Activated CD8-positive, alpha-beta T cell treated with anti-CD3 and anti-CD28 coated beads for 36 hours (primary cell): ENCODE measurements at regions of chr20 and their contacts with region 1.

Region 1: DNA sequence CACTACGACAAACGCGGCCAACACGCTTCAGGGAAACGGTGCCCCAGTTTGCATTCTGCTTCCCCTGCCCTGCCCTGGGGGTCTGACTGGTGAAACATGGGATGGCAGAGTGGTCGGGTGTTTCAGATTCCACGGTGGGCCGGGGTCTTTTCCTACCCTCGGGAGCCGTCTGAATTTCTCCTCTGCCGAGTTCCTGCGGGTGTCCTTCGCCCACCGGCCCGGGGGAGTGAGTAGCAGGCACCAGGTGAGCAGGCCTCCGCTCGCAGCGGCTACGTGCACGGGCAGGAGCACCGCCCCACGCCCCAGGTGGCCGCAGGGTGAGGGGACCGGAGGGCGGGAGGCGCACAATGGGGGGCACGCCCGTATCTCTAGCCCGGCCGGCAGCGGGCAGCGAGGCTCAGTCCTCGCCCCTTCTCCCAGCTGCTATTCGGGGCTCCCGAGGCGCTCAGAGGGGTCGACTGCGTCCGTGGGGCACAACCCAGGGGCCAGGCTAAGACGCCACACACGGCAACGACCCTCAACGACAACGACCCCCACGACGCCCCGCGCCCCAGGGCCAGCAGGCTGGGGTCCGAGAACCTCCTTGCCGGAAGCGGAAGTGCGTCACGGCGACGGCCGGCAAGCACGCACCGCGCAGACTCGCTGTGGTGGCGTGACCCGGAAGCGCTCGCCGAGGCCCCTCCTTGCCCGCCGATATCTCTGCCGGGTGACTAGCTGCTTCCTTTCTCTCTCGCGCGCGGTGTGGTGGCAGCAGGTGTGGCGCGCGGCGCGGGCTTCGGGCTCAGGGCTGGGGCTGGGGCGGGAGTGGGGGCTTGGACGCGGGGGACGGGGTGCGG is at the start of gene RPS21:
- DNase-seq: peak; percentile 94
- ATAC-seq: peak; percentile 87
- H3K4me3 Mint-ChIP-seq: peak within 1 kb of the TSS; percentile 95
- H3K27ac Mint-ChIP-seq: peak within 1 kb of the TSS; percentile 91
- H3K4me1 Mint-ChIP-seq: peaks cover 43% of the 10 kb centered on the region
- H3K27me3 Mint-ChIP-seq: no peaks in the 10 kb centered on the region
- CTCF ChIP-seq: no peak
- total RNA-seq, gene RPS21: 2,670 to 2,760 TPM

Region 2: DNA sequence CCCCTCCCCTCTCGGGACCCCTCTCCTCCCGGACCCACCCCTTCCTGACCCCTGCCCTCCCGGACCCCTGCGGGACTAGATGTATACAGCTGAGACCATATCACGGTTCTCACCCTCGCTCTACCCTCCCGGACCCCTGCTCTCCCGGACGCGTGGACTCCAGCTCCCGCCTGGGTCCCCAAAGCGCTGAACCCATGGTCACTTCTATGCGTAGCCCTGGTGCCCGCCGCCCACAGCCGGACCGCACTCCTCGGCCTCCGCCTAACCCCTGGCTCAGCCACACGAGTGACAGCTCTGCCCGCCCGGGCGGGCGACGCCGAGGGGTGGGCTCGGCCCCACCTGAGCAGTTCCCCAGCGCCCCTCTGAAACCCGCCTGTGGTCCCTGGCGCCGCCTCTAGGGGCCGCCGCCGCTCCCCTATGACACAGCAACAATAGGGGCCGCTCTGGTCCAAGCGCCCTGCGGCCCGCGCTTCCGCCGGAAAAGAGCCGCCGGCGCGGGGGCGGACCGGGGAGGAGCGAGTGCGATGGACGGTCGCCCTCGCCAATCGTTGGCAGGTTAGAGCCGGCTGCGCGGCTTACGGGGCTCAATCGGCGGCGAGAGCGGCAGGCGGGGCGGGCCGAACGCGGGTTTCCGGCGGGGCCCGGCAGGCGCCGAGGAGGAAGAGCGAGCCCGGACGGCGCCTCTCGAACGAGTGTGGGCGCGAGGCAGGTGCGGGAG is 84.1 kb before region 1 on chr20 and contains the start of gene ADRM1:
- CTCF ChIA-PET with region 1: interaction called, 18 read pairs
- POLR2A ChIA-PET with region 1: interaction called, 5 read pairs
- intact Hi-C with region 1: loop called (anchors 2 kb)
- DNase-seq: peak; percentile 96
- ATAC-seq: peak; percentile 86
- H3K4me3 Mint-ChIP-seq: peak within 1 kb of the TSS; percentile 96
- H3K27ac Mint-ChIP-seq: peak within 1 kb of the TSS; percentile 99
- H3K4me1 Mint-ChIP-seq: peaks cover 24% of the 10 kb centered on the region
- H3K27me3 Mint-ChIP-seq: no peaks in the 10 kb centered on the region
- CTCF ChIP-seq: peak; percentile 74
- total RNA-seq, gene ADRM1: 110 to 115 TPM

Region 3: DNA sequence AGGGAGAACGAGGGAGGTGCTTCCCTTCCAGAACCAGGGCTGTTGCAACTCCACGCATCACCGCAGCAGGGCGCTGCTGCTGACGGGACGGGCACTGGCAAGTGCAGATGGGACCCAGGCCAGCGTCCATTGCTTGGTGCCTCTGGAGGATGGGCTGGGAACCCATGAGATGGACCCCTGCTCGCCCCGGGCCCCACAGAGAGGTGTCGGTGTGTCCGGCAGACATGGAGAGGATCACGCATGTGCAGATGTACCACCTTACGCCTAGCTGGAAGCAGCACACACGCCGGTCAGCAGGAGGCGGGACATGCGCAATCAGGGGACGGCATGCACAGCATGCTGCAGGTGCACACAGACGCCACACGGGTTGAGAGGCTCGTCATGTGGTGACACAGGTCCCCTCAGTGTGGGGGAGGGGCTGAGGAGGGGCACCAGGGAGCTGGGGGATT is 14.8 kb after region 1 on chr20:
- CTCF ChIA-PET with region 1: interaction called, 5 read pairs
- POLR2A ChIA-PET with region 1: interaction called, 53 read pairs
- intact Hi-C with region 1: no loop called
- DNase-seq: no peak
- ATAC-seq: no peak
- H3K4me3 Mint-ChIP-seq: no peak overlapping the region
- H3K27ac Mint-ChIP-seq: no peak overlapping the region
- H3K4me1 Mint-ChIP-seq: peaks cover 18% of the 10 kb centered on the region
- H3K27me3 Mint-ChIP-seq: no peaks in the 10 kb centered on the region
- CTCF ChIP-seq: no peak

Region 4: GRCh38 chr20:62409931-62410745 is 23.5 kb after region 1 on chr20:
- CTCF ChIA-PET with region 1: interaction called, 5 read pairs
- POLR2A ChIA-PET with region 1: interaction called, 18 read pairs
- intact Hi-C with region 1: no loop called
- DNase-seq: peak; percentile 62
- ATAC-seq: peak; percentile 14
- H3K4me3 Mint-ChIP-seq: no peak overlapping the region
- H3K27ac Mint-ChIP-seq: no peak overlapping the region
- H3K4me1 Mint-ChIP-seq: peaks cover 12% of the 10 kb centered on the region
- H3K27me3 Mint-ChIP-seq: no peaks in the 10 kb centered on the region
- CTCF ChIP-seq: peak; percentile 35